CD4-positive, alpha-beta T cell (primary cell): ENCODE measurements at regions of chr3 and their contacts with region 1.

Region 1: GRCh38 chr3:132507657-132508056 is 89.4 kb upstream of the ACKR4 start:
- DNase-seq: no peak
- ATAC-seq: no peak
- H3K4me3 ChIP-seq: no peak overlapping the region
- H3K4me3 Mint-ChIP-seq: no peak overlapping the region
- H3K27ac ChIP-seq: no peak overlapping the region
- H3K27ac Mint-ChIP-seq: no peak overlapping the region
- H3K4me1 ChIP-seq: no peaks in the 10 kb centered on the region
- H3K4me1 Mint-ChIP-seq: no peaks in the 10 kb centered on the region
- H3K27me3 ChIP-seq: no peaks in the 10 kb centered on the region
- H3K27me3 Mint-ChIP-seq: no peaks in the 10 kb centered on the region
- CTCF ChIP-seq: no peak

Region 2: DNA sequence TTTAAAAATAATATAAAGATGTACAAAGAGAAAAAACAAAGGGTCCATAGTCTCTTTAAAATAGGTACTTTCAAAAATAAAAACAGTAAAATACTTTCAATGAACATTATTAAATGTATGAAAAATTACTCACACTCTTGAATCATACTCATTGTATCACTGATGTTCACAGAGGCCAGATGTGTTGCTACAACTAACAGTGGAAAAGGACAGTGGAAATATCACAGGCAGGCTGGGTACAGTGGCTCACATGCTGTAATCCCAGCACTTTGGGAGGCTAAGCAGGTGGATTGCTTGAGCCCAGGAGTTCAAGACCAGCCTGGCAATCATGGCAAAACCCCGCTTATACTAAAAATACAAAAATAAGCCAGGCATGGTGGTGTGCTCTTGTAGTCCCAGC is 187.8 kb after region 1 on chr3:
- CTCF ChIA-PET with region 1: no interaction called
- POLR2A ChIA-PET with region 1: no interaction called
- intact Hi-C with region 1: loop called in 1 of 2 experiments (anchors 10 kb)
- DNase-seq: no peak
- ATAC-seq: no peak
- H3K4me3 ChIP-seq: no peak overlapping the region
- H3K4me3 Mint-ChIP-seq: no peak overlapping the region
- H3K27ac ChIP-seq: no peak overlapping the region
- H3K27ac Mint-ChIP-seq: no peak overlapping the region
- H3K4me1 ChIP-seq: no peaks in the 10 kb centered on the region
- H3K4me1 Mint-ChIP-seq: no peaks in the 10 kb centered on the region
- H3K27me3 ChIP-seq: no peaks in the 10 kb centered on the region
- H3K27me3 Mint-ChIP-seq: no peaks in the 10 kb centered on the region
- CTCF ChIP-seq: no peak